ENCODE measurements at regions of chrX and their contacts with region 1.

Region 1: DNA sequence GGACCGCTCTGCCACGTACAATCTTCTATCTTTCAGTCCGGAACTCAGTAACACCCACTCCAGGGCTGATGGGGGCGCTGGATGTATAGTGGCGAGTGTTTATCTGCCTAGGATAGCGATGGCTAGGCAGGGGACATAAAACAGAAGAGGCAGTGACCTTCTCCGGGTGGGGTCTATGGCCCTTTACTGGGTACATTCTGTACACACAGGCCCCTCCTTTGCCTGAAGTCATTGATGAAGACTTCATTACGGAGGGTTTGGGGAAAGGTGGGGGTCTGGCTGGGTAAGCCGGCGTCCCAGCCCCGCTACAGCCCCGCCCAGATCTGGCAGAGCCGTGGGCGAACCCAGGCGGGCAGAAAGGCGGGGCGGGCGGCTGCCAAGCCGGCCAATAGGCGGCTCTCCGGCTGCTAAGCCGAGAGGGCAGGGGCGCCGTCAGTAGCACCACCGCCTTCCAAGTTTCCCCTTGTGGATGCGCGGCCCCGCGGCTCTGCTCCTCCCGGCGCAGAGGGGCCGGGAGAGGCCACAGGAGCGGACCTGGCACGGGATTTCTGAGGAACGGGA is at the start of gene CHST7:
- DNase-seq: peak; percentile 41
- CTCF ChIP-seq: peak; percentile 41

Region 2: DNA sequence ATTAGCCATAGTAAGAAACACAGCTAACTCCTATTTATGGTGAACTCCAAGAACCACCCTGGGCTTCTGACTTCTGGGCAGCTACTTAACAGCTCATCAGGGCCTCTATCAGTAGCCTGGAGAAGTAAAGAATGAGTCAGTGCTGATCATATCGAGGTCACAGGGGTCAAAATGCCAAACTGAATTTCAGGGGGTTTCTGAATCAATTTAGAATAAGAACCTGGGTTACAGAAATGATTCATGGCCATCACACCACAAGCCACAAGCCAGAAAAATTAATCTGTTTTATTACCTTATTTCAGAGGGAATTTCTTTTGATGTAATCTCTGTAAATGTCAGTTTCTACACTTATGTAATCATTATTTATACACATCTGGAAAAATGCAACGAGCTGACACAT is 64.5 kb after region 1 on chrX:
- in situ Hi-C with region 1: loop called (anchors 10 kb)
- DNase-seq: no peak
- CTCF ChIP-seq: no peak